Heart right ventricle (tissue), 16 donors: ENCODE measurements at regions of chr6 and their contacts with region 1.

Region 1: GRCh38 chr6:151067684-151068596 is 171.8 kb upstream of the AKAP12 start:
- DNase-seq: peak; percentile 64 to 66
- ATAC-seq: peak; percentile 44 to 82 (median 69)
- H3K4me3 ChIP-seq: no peak overlapping the region
- H3K27ac ChIP-seq: peak overlapping the region; percentile 12 to 79 (median 74)
- H3K4me1 ChIP-seq: peaks cover 0 to 65% (median 30%) of the 10 kb centered on the region in 9 donors
- H3K27me3 ChIP-seq: no peaks in the 10 kb centered on the region
- CTCF ChIP-seq: no peak

Region 2: GRCh38 chr6:150924808-150925589 is 142.9 kb before region 1 on chr6:
- intact Hi-C with region 1: no loop called
- DNase-seq: no peak
- ATAC-seq: peak in 7 of 8 donors; percentile 51 to 86 (median 73)
- H3K4me3 ChIP-seq: no peak overlapping the region
- H3K27ac ChIP-seq: peak overlapping the region in 7 of 10 donors; percentile 28 to 58 (median 45)
- H3K4me1 ChIP-seq: peaks cover 0 to 18% (median 0%) of the 10 kb centered on the region in 9 donors
- H3K27me3 ChIP-seq: no peaks in the 10 kb centered on the region
- CTCF ChIP-seq: no peak

Region 3: DNA sequence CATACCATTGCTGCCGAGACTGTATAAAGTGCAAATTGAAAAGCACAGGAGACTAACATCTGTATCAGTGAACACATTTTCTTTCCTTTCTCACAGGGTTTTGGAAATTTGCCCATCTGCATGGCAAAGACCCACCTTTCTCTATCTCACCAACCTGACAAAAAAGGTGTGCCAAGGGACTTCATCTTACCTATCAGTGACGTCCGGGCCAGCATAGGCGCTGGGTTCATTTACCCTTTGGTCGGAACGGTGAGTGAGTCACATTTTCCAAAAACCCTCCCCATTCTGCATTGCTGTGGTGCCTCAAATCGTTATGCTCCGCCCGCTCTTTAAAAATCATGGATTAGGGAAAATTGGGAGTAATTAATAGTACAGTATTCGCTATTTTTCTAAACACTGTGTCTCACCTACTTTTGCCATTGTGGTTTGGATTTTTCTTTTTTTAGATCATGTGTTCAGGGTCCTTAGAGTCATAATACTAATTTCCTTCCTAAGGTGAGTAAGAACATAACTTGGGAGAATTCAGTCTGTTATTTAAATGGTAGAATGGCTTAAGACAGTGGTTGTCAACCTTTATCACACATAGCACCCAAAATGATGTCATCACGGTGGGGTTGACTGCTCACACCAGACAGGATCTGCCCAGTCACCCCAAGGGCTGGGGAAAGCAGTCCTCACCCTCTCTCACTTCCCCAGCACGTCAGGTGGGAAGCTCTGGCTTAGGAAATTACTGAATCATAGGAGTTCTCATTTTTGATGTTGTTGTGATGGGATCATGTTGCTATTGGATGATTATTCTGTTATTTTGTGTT is 30.9 kb before region 1 on chr6:
- intact Hi-C with region 1: loop called in 2 of 10 experiments (anchors 2 to 5 kb)
- DNase-seq: no peak
- ATAC-seq: no peak
- H3K4me3 ChIP-seq: no peak overlapping the region
- H3K27ac ChIP-seq: peak overlapping the region in 7 of 10 donors; percentile 28 to 77 (median 42)
- H3K4me1 ChIP-seq: peaks cover 2 to 34% (median 19%) of the 10 kb centered on the region in 9 donors
- H3K27me3 ChIP-seq: no peaks in the 10 kb centered on the region
- CTCF ChIP-seq: no peak